ENCODE measurements at regions of chr17 and their contacts with region 1.

Region 1: DNA sequence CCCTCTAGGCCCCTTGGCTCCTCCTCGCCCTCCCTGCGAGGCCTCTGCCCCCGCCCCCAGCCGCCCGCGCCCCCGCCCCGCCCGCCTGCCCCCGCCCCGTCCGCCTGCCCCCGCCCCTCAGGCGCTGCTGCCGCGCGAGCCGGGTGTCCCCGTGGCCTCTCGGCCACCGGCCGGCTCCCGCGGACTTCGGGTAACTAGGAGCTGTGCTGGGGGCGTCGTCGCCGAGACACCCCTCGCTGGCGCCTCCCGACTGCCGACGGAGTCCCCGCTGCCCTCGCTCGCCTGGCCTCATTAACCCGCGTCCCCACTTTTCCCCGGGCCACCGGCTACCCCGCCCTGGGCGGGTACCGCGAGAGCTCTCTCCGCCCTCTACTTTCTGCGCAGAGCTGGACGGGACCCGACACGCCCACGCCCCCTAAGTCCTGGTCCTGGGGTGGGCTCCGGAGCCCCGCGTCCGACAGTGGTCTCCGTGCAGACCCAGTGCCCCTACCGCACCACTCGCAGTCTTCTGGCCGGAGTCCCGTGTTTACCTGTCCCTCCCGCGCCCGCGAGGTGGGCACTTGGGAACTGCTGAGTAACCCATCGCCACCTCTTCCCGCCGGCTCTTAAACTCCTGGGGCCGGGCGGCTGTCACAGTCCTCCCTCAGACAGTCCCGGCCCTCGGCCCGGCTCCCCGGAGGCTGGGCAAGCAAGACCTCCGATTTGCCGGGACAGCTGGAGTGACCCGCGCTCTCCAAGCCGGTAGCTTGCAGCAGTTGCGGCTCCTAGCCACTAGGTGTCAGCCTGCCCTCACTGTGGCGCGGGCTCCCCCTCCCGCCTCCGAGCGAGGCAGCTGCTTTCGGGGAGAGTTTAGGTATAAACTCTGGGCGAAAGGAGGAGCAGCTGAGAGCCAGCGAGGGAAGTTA is at the start of gene TLCD1:
- DNase-seq: peak; percentile 95
- H3K4me3 ChIP-seq: peak within 1 kb of the TSS; percentile 78 to 86 (median 79)
- H3K27ac ChIP-seq: peak within 1 kb of the TSS; percentile 96
- H3K4me1 ChIP-seq: peaks cover 53% of the 10 kb centered on the region
- H3K27me3 ChIP-seq: no peaks in the 10 kb centered on the region
- CTCF ChIP-seq: peak; percentile 94 to 99
- total RNA-seq, gene TLCD1: 4.7 to 16.7 TPM

Region 2: GRCh38 chr17:28634206-28634856 is 92.1 kb before region 1 on chr17:
- CTCF ChIA-PET with region 1: no interaction called
- dilution Hi-C with region 1: no loop called
- in situ Hi-C with region 1: no loop called
- intact Hi-C with region 1: no loop called
- DNase-seq: no peak
- H3K4me3 ChIP-seq: no peak overlapping the region
- H3K27ac ChIP-seq: no peak overlapping the region
- H3K4me1 ChIP-seq: no peaks in the 10 kb centered on the region
- H3K27me3 ChIP-seq: no peaks in the 10 kb centered on the region
- CTCF ChIP-seq: no peak

Region 3: DNA sequence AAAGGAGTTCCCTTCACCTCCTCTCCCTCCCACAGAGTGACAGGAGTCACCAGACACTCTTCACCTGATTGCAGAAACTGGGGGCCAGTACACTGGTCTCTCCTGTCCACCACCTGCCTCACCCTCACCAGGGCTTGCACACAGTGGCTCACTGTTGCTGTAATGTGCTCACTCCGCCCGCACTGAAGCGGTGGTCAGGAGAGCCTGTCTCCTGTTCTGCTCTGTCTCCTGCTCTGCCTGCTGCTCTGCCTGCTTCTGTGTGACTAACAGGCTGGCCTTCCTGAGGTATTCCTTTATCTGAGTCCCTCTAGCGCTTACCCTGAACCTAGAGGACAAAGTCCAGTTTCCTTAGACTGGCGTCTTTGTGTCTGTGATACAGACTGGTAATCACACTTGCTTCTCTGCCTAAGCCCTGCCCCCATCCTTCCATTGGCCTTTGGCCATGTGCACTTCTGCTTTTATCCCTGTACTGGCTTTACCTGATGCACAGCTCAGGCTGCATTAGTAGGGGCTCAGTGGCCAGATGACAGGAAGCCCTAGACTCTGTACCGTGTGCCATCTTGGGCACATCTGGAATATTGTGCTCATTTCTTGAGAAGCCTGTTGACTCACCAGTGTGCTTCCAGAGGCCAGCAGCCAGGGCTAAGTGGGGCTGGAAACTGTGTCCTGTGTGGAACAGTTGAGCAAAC is 28.1 kb before region 1 on chr17:
- CTCF ChIA-PET with region 1: no interaction called
- dilution Hi-C with region 1: no loop called
- in situ Hi-C with region 1: no loop called
- intact Hi-C with region 1: no loop called
- DNase-seq: no peak
- H3K4me3 ChIP-seq: no peak overlapping the region
- H3K27ac ChIP-seq: no peak overlapping the region
- H3K4me1 ChIP-seq: no peaks in the 10 kb centered on the region
- H3K27me3 ChIP-seq: no peaks in the 10 kb centered on the region
- CTCF ChIP-seq: no peak

Region 4: GRCh38 chr17:28743225-28744103 is 17.0 kb after region 1 on chr17 and contains the start of gene TRAF4:
- CTCF ChIA-PET with region 1: interaction called, 16 read pairs
- dilution Hi-C with region 1: no loop called
- in situ Hi-C with region 1: no loop called
- intact Hi-C with region 1: loop called (anchors 1 kb)
- DNase-seq: peak; percentile 98
- H3K4me3 ChIP-seq: peak within 1 kb of the TSS; percentile 88 to 96 (median 91)
- H3K27ac ChIP-seq: peak within 1 kb of the TSS; percentile 98
- H3K4me1 ChIP-seq: peaks cover 29% of the 10 kb centered on the region
- H3K27me3 ChIP-seq: no peaks in the 10 kb centered on the region
- CTCF ChIP-seq: peak in 1 of 2 donors; percentile 18
- total RNA-seq, gene TRAF4: 50.5 to 147 TPM

Region 5: DNA sequence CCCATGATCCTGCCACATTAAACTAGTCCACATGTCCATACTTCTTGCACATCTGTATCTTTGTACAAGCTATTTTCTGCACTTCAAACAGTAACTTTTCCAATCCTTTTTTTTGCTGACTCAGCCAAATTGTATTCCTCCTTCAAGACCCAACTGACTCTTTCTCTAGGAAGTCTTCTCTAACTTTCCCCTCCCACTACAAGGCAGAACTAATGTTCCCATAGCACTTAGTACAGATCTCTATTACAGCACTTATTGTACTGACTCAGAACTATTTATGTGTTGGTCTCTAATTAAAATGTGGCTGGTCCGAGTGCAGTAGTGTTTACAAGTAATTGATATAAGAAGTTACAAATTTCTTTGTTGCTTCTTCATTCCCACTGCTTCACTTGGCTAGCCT is 107.9 kb after region 1 on chr17:
- CTCF ChIA-PET with region 1: no interaction called
- dilution Hi-C with region 1: no loop called
- in situ Hi-C with region 1: no loop called
- intact Hi-C with region 1: no loop called
- DNase-seq: no peak
- H3K4me3 ChIP-seq: no peak overlapping the region
- H3K27ac ChIP-seq: no peak overlapping the region
- H3K4me1 ChIP-seq: no peaks in the 10 kb centered on the region
- H3K27me3 ChIP-seq: no peaks in the 10 kb centered on the region
- CTCF ChIP-seq: no peak

Region 6: DNA sequence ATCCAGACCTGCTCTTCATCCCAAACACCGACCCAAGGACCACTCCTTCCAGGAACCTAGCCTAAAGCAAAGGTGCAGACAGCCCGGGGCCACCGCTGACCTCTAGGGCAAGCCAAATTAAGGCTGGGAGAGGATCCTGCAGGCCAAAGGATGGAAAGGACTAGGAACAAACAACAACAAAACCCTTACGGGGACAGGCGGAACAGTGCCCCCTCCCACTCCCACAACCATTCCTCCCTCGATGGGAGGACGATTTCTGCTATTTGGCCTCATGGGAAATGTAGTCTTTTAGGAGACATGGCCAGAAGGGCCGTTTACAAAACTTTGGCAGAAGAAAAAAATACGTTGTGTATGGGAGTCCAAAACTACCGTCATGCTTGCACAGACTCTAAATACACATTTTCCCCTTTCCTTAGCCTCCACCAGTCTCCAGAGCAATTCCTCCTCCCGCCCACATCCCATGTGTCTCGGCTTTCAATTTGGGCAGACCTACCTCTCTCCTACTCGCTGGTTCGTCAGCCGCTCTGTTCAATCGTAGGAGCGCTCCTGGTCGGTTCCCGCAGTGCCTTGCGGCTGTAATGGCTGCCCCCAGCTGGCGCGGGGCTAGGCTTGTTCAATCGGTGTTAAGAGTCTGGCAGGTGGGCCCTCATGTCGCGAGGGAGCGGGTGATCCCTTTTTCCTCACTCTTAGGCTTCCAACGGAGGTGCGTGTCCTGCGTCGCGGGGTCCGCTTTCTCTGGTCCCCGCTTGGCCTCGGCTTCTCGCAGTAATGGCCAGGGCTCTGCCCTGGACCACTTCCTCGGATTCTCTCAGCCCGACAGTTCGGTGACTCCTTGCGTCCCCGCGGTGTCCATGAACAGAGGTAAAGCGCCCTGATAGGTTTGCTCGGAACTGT is 128.2 kb after region 1 on chr17 and contains the start of gene ERAL1:
- CTCF ChIA-PET with region 1: no interaction called
- dilution Hi-C with region 1: no loop called
- in situ Hi-C with region 1: no loop called
- intact Hi-C with region 1: loop called (anchors 1 kb)
- DNase-seq: peak; percentile 85
- H3K4me3 ChIP-seq: peak within 1 kb of the TSS; percentile 61 to 82 (median 69)
- H3K27ac ChIP-seq: peak within 1 kb of the TSS; percentile 43
- H3K4me1 ChIP-seq: peaks cover 12% of the 10 kb centered on the region
- H3K27me3 ChIP-seq: no peaks in the 10 kb centered on the region
- CTCF ChIP-seq: peak in 1 of 2 donors; percentile 8
- total RNA-seq, gene ERAL1: 48.4 to 53.2 TPM

Region 7: DNA sequence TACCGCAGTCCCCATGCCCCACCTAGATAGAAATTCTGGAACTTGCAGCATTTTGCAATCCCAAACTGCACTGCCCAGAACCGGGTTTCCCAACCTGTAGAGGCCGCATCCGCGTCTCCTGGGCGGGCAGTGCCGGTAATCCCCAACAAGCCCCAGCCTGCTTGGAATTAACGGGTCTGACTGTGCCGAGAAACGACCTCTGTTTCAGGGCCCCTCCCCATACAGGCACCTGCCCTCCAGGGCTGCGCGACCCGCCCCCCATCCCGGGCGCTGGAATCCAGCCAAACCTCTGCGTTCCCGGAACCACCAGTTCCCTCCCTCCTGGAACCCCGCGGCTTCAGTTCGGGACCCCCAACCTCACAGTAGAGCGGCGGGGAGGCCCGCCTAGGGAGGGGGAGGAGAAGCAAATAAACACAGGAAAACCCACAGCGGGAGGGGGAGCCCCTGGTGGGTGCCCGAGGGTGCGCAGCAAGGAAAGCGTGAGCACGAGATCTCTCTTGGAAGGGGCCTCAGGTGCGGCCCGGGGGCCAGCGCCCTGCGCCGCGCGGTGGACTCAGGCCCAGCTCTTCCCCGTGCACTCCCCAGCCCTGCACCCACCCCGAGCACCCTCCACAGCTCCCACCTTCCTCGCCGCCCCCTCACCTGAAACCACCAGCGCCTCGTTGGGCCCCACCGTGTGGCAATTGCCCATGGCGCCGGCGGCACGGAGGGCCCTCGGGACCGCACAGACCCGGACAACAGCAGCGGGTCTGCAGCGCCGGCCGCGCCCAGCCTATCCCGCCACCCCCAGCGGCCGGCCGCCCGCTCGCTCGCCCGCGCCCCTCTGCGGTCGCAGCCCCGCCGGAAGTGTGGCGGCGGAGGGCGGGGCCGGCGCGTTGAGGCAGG is 170.6 kb after region 1 on chr17 and contains the start of gene FLOT2:
- CTCF ChIA-PET with region 1: no interaction called
- dilution Hi-C with region 1: no loop called
- in situ Hi-C with region 1: no loop called
- intact Hi-C with region 1: loop called (anchors 1 kb)
- DNase-seq: peak; percentile 93
- H3K4me3 ChIP-seq: peak within 1 kb of the TSS; percentile 63 to 82 (median 74)
- H3K27ac ChIP-seq: peak within 1 kb of the TSS; percentile 69
- H3K4me1 ChIP-seq: peaks cover 27% of the 10 kb centered on the region
- H3K27me3 ChIP-seq: no peaks in the 10 kb centered on the region
- CTCF ChIP-seq: peak in 1 of 2 donors; percentile 24
- total RNA-seq, gene FLOT2: 80.2 to 129 TPM

Region 8: DNA sequence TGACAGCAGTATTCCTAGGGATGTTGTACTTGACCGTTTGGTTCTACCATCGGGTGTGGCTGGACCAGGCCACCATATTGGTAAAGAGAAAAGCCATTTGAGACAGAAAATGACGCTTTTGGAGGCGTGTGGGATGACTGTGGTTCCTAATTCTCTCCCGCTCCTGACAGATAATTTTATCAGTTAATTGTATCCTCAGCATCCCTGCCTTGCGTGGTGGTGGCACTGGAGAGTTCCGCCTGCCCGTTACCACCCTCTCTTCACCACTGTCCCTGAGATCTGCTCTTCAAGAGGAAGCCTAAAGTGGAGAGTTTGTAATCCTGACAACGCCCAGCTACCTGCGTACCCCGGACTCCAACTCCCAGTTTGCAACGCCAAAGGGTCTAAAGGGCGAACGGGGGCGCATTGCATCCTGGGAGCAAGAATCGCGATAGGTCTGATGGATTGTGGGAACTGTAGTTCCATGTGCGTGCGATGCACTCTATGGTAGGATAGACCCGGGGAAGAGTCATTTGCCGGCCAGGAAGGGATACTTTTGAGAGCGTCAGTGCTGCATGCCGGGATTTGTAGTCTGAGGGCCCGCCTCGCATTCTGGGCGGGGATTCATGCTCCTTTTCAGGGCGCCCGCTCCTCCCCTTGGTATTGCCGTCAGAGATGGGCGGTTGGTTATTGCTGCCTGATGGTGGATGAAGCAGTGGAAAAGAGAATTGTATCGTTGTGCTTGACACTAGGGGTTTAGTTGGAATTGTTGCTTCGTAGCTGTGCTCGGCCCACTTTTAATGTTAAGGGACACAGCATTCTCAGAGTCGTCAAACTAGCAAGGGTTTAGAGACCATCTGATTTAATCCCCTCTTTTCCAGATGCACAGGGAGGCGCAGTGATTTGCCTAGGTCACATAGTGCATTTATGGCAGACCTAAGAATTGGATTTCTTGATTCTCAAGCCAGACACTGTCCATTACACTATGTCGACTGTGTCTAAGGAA is 225.8 kb after region 1 on chr17:
- CTCF ChIA-PET with region 1: interaction called, 3 read pairs
- dilution Hi-C with region 1: no loop called
- in situ Hi-C with region 1: no loop called
- intact Hi-C with region 1: loop called (anchors 1 kb)
- DNase-seq: peak; percentile 99
- H3K4me3 ChIP-seq: peak overlapping the region; percentile 64 to 80 (median 72)
- H3K27ac ChIP-seq: peak overlapping the region; percentile 91
- H3K4me1 ChIP-seq: peaks cover 11% of the 10 kb centered on the region
- H3K27me3 ChIP-seq: no peaks in the 10 kb centered on the region
- CTCF ChIP-seq: no peak

Region 9: DNA sequence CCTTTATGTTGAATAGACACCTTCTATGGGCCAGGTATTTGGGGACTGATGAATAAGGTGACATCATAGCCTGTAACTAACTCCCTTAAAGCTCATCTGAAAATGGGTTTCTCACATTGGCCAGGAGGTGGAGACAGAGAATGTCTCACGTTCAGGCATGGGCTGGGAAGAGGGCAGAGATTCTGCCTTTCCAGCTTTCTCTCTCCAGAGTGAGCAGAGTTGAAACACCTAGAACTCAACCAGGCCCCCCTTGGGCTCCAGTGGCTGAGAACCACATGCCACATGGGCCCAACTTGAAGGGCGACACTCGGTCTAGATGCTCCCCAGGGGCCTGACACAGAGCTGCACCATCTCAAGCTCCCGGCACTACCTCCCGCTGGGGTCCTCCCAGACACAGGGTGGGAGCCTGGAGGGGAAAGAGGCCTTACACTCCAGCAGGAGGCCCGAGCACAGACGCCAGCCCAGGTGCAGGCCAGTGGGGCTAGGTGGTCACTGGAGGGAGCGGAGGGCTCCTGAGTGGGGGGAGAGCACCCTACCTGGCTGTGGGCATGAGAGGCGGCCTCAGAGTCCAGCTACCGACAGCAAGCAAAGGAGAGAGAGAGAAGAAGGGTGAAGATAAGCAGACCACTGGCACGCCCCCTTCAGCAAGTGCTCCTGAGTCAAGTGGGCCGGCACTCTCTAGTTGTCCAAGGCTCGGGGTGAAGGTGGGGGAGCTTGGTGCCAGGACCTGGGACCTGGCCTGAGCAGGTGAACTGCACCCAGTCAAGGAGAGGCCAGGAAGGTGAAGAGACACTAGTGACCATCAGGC is 397.8 kb after region 1 on chr17:
- CTCF ChIA-PET with region 1: no interaction called
- dilution Hi-C with region 1: no loop called
- in situ Hi-C with region 1: loop called in 1 of 2 experiments (anchors 25 kb)
- intact Hi-C with region 1: no loop called
- DNase-seq: peak; percentile 68
- H3K4me3 ChIP-seq: no peak overlapping the region
- H3K27ac ChIP-seq: no peak overlapping the region
- H3K4me1 ChIP-seq: peaks cover 3% of the 10 kb centered on the region
- H3K27me3 ChIP-seq: no peaks in the 10 kb centered on the region
- CTCF ChIP-seq: peak; percentile 70 to 78

Measured in mammary epithelial cell (primary cell).